Heart right ventricle (tissue), 16 donors: ENCODE measurements at regions of chr1 and their contacts with region 1.

Region 1: GRCh38 chr1:16243936-16244649 is 7.1 kb upstream of the CPLANE2 start:
- DNase-seq: peak; percentile 65 to 76
- ATAC-seq: peak; percentile 7 to 57 (median 38)
- H3K4me3 ChIP-seq: no peak overlapping the region
- H3K27ac ChIP-seq: peak overlapping the region in 3 of 10 donors; percentile 10 to 46 (median 36)
- H3K4me1 ChIP-seq: peaks cover 13 to 48% (median 34%) of the 10 kb centered on the region in 9 donors
- H3K27me3 ChIP-seq: no peaks in the 10 kb centered on the region
- CTCF ChIP-seq: peak; percentile 76 to 87 (median 83)

Region 2: GRCh38 chr1:16187748-16188401 is 56.2 kb before region 1 on chr1:
- intact Hi-C with region 1: loop called in 2 of 10 experiments (anchors 5 kb)
- DNase-seq: peak; percentile 69 to 83
- ATAC-seq: peak; percentile 72 to 84 (median 80)
- H3K4me3 ChIP-seq: no peak overlapping the region
- H3K27ac ChIP-seq: no peak overlapping the region
- H3K4me1 ChIP-seq: peaks cover 0 to 38% (median 10%) of the 10 kb centered on the region in 9 donors
- H3K27me3 ChIP-seq: no peaks in the 10 kb centered on the region
- CTCF ChIP-seq: peak; percentile 94 to 99 (median 97)

Region 3: DNA sequence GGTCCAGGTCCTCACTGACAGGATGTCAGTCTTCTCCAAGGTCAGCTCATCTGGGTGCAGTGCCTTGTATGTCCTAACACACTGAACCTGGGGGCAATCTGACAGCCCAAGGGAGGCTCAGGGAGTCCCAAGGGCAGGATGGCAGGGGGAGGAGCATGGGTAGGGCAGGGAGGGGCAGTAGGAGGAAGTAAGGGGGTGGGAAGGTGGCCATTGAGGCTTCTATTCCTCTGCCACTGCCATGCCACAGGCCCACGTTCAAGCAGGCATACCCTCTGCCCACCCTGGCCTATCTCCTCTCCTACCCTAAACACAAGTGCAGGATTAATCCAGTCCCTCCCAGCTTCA is 45.0 kb before region 1 on chr1:
- intact Hi-C with region 1: loop called in 3 of 10 experiments (anchors 5 kb)
- DNase-seq: no peak
- ATAC-seq: no peak
- H3K4me3 ChIP-seq: no peak overlapping the region
- H3K27ac ChIP-seq: no peak overlapping the region
- H3K4me1 ChIP-seq: no peaks in the 10 kb centered on the region
- H3K27me3 ChIP-seq: no peaks in the 10 kb centered on the region
- CTCF ChIP-seq: no peak

Region 4: GRCh38 chr1:16206547-16207317 is 37.4 kb before region 1 on chr1:
- intact Hi-C with region 1: loop called in 8 of 10 experiments (anchors 5 kb)
- DNase-seq: peak; percentile 97
- ATAC-seq: peak; percentile 93 to 97 (median 96)
- H3K4me3 ChIP-seq: peak overlapping the region; percentile 9 to 64 (median 58)
- H3K27ac ChIP-seq: peak overlapping the region; percentile 73 to 96 (median 90)
- H3K4me1 ChIP-seq: peaks cover 0 to 25% (median 17%) of the 10 kb centered on the region in 9 donors
- H3K27me3 ChIP-seq: no peaks in the 10 kb centered on the region
- CTCF ChIP-seq: no peak

Region 5: DNA sequence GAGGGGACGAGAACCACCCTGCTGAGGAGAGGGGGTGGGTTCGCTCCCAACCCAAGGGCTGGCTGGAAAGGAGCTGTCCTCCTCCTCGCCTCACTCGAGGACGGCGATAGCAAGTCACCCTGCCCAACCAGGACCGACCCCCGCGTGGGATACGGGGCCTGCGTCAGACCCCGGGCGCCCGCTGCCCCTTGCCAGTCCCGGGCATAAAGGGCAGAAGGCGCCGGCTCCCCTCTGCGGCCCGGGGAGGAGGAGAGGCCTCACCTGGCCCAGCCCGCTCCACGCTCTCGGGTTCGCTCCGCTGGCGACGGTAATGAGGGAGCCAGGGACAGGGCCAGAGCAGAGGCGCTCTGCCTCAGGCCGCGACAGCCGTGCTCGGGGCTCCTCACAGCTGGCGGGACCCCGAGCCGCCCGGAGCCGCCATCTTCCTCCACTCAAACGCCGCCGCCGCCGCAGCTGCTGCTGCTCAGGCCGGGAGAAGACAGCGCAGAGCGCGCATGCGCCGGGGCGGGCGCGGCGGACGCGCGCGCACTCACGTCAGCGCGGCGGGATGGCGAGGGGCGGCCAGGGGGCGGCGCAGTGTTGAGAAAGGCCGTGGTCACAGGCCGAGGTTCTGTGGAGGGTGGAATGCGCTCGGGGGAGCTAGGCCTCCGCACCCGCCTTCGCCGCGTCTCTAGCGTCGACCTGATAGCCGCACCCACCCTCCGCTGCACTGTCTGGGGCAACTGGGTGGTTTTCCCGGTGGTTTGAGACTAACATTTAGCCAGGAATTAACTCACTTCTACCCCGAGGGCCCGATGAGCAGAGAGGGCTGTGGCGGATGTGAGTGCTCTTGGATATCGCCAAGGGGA is 108.1 kb after region 1 on chr1 and contains the start of gene FBXO42:
- intact Hi-C with region 1: loop called in 3 of 10 experiments (anchors 5 kb)
- DNase-seq: peak; percentile 90 to 94
- ATAC-seq: peak; percentile 96 to 99 (median 98)
- H3K4me3 ChIP-seq: peak within 1 kb of the TSS; percentile 73 to 99 (median 95)
- H3K27ac ChIP-seq: peak within 1 kb of the TSS; percentile 81 to 98 (median 96)
- H3K4me1 ChIP-seq: peaks cover 0 to 46% (median 37%) of the 10 kb centered on the region in 9 donors
- H3K27me3 ChIP-seq: no peaks in the 10 kb centered on the region
- CTCF ChIP-seq: peak in 8 of 9 donors; percentile 45 to 75 (median 60)
- total RNA-seq, gene FBXO42: 17.3 to 26.6 (median 21.4) TPM

Region 6: GRCh38 chr1:16366722-16367257 is 122.7 kb after region 1 on chr1 and contains the start of gene SZRD1:
- intact Hi-C with region 1: loop called in 5 of 10 experiments (anchors 2 to 10 kb)
- DNase-seq: peak; percentile 95 to 97
- ATAC-seq: peak; percentile 91 to 97 (median 94)
- H3K4me3 ChIP-seq: peak within 1 kb of the TSS; percentile 50 to 96 (median 75)
- H3K27ac ChIP-seq: peak within 1 kb of the TSS; percentile 91 to 99 (median 98)
- H3K4me1 ChIP-seq: peaks cover 12 to 69% (median 33%) of the 10 kb centered on the region in 9 donors
- H3K27me3 ChIP-seq: no peaks in the 10 kb centered on the region
- CTCF ChIP-seq: no peak
- total RNA-seq, gene SZRD1: 87.1 to 131 (median 102) TPM